ENCODE measurements at regions of chr12 and their contacts with region 1.

Region 1: DNA sequence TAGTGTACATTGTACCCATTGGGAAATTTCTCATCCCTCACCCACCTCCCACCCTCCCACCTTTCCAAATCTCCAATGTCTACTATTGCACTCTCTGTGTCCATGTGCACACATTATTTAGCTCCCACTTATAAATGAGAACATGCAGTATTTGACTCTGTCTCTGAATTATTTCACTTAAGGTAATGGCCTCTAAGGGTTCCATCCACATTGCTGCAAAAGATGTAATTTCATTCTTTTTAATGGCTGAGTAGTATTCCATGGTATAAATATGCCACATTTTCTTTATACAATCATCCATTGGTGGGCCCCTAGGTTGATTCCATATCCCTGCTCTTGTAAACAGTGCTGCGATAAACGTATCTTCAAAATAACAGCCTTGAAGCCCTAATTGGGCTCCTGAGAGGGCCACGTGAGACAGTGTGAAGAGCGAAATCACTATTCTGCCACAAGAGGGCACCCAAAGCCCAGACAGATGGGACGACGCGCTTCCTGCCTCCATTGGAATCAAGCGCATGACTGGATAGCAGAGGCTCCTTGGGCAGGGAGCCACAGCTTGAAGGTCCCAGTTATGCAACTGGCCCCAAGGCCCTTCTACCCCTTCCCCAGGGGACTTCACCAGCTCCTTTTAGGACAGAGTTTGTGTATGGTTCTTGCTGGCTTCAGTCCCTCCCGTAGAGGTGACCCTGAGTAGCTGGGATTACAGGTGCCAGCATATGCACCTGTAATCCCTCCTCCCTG is 21.3 kb upstream of the CD27 start:
- DNase-seq: peak; percentile 45 to 91 (median 76)
- ATAC-seq: peak; percentile 62 to 71
- H3K4me3 Mint-ChIP-seq: peak overlapping the region in 7 of 10 donors; percentile 0 to 55 (median 25)
- H3K27ac Mint-ChIP-seq: peak overlapping the region; percentile 71 to 93 (median 87)
- H3K4me1 Mint-ChIP-seq: peaks cover 20 to 46% (median 38%) of the 10 kb centered on the region in 4 donors
- H3K27me3 Mint-ChIP-seq: no peaks in the 10 kb centered on the region

Region 2: GRCh38 chr12:6434205-6435140 is 11.0 kb after region 1 on chr12:
- POLR2A ChIA-PET with region 1: interaction called, 12 read pairs
- DNase-seq: peak in 7 of 10 donors; percentile 17 to 58 (median 44)
- ATAC-seq: peak; percentile 93 to 98
- H3K4me3 Mint-ChIP-seq: peak overlapping the region; percentile 51 to 86 (median 69)
- H3K27ac Mint-ChIP-seq: peak overlapping the region; percentile 92 to 98 (median 96)
- H3K4me1 Mint-ChIP-seq: peaks cover 22 to 48% (median 44%) of the 10 kb centered on the region in 4 donors
- H3K27me3 Mint-ChIP-seq: no peaks in the 10 kb centered on the region

Region 3: DNA sequence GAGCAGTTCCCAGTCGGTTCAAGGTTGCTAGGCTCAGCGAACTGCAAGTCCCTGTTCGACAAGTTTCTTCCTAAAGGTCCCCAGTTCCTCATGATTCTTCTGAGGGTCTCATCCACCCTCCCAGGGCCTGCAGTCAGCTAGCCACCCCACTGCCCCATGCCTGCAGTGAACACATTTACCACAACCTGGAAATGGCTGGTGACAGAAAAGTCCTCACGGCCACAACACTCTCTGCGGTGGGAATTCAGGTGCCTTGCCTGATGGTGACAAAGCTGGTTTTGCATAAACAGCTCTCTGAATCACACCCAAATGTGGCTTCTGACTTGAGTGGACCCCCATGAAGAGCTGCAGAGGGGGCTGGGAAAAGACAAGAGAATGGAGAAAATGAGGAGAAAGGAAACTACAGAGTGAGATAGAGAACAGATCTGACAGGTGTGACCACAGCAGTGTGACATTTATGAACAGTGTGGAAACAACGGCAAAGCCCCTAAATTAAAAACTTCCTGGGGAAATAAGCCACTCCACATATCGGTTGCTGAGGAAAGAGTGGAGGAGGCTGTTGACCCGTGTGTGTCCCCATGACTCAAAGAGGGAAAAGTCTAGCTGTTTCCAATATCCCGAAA is 20.0 kb after region 1 on chr12:
- POLR2A ChIA-PET with region 1: interaction called, 179 read pairs
- DNase-seq: no peak
- ATAC-seq: peak in 1 of 2 donors; percentile 27
- H3K4me3 Mint-ChIP-seq: peak overlapping the region; percentile 84 to 100 (median 99)
- H3K27ac Mint-ChIP-seq: peak overlapping the region; percentile 87 to 99 (median 96)
- H3K4me1 Mint-ChIP-seq: peaks cover 40 to 70% (median 60%) of the 10 kb centered on the region in 4 donors
- H3K27me3 Mint-ChIP-seq: no peaks in the 10 kb centered on the region

Region 4: GRCh38 chr12:6451348-6452244 is 28.2 kb after region 1 on chr12 and contains the start of gene TAPBPL:
- POLR2A ChIA-PET with region 1: interaction called, 179 read pairs
- DNase-seq: peak; percentile 65 to 90 (median 83)
- ATAC-seq: peak; percentile 86 to 95
- H3K4me3 Mint-ChIP-seq: peak within 1 kb of the TSS; percentile 95 to 100 (median 98)
- H3K27ac Mint-ChIP-seq: peak within 1 kb of the TSS; percentile 95 to 100 (median 100)
- H3K4me1 Mint-ChIP-seq: peaks cover 46 to 79% (median 75%) of the 10 kb centered on the region in 4 donors
- H3K27me3 Mint-ChIP-seq: no peaks in the 10 kb centered on the region
- polyA plus RNA-seq, gene TAPBPL: 46.0 to 126 (median 106) TPM

Region 5: GRCh38 chr12:6533923-6534694 is 110.7 kb after region 1 on chr12 and contains the start of gene GAPDH:
- POLR2A ChIA-PET with region 1: interaction called, 38 read pairs
- DNase-seq: peak in 8 of 10 donors; percentile 69 to 91 (median 82)
- ATAC-seq: peak; percentile 58 to 68
- H3K4me3 Mint-ChIP-seq: peak within 1 kb of the TSS; percentile 87 to 97 (median 92)
- H3K27ac Mint-ChIP-seq: peak within 1 kb of the TSS; percentile 94 to 99 (median 98)
- H3K4me1 Mint-ChIP-seq: peaks cover 18 to 51% (median 50%) of the 10 kb centered on the region in 4 donors
- H3K27me3 Mint-ChIP-seq: no peaks in the 10 kb centered on the region
- polyA plus RNA-seq, gene GAPDH: 1,014 to 1,110 (median 1,062) TPM

Region 6: GRCh38 chr12:6540181-6540877 is 116.9 kb after region 1 on chr12:
- POLR2A ChIA-PET with region 1: interaction called, 38 read pairs
- DNase-seq: peak in 5 of 10 donors; percentile 21 to 63 (median 41)
- ATAC-seq: peak; percentile 48 to 51
- H3K4me3 Mint-ChIP-seq: peak overlapping the region; percentile 65 to 86 (median 80)
- H3K27ac Mint-ChIP-seq: peak overlapping the region; percentile 66 to 93 (median 76)
- H3K4me1 Mint-ChIP-seq: peaks cover 14 to 55% (median 44%) of the 10 kb centered on the region in 4 donors
- H3K27me3 Mint-ChIP-seq: no peaks in the 10 kb centered on the region

Measured in naive thymus-derived CD8-positive, alpha-beta T cell (primary cell).